ENCODE measurements at regions of chr11 and their contacts with region 1.

Region 1: DNA sequence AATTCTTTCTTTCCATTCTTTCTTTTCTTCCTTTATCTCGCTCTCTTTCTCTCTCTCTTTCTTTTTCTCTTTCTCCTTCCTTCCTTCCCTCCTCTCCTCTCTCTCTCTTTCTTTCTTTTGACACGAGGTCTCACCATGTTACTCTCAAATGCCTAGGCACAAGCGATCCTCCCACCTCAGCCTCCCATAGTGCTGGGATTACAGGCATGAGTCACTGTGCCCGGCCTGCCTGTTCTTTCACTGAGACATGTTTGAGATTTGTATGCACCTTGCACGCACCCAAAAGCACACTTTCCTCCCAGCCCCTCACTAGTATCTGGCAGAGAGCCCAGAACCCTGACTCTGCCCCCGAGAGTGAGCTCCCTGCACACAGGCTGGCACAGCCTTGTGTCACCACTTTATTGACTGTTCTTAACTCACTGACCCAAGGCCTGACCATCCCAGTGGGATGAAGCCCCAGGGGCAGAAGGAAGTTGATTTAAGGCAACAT is 56.8 kb downstream of the CD6 start:
- DNase-seq: peak in 3 of 9 donors; percentile 46 to 80 (median 60)
- ATAC-seq: peak; percentile 6
- H3K4me3 ChIP-seq: peak overlapping the region; percentile 30
- H3K4me3 Mint-ChIP-seq: peak overlapping the region; percentile 78 to 91 (median 86)
- H3K27ac ChIP-seq: peak overlapping the region; percentile 76
- H3K27ac Mint-ChIP-seq: peak overlapping the region; percentile 91 to 99 (median 97)
- H3K4me1 ChIP-seq: peaks cover 43 to 56% of the 10 kb centered on the region in 2 donors
- H3K4me1 Mint-ChIP-seq: peaks cover 62 to 97% (median 90%) of the 10 kb centered on the region in 7 donors
- H3K27me3 ChIP-seq: no peaks in the 10 kb centered on the region
- H3K27me3 Mint-ChIP-seq: no peaks in the 10 kb centered on the region

Region 2: GRCh38 chr11:60913793-60914632 is 114.3 kb before region 1 on chr11 and contains the start of gene TMEM109:
- CTCF ChIA-PET with region 1: no interaction called
- POLR2A ChIA-PET with region 1: interaction called, 3 read pairs
- intact Hi-C with region 1: loop called in 1 of 2 experiments (anchors 5 kb)
- DNase-seq: peak; percentile 77 to 93 (median 91)
- ATAC-seq: peak; percentile 76
- H3K4me3 ChIP-seq: peak within 1 kb of the TSS; percentile 94
- H3K4me3 Mint-ChIP-seq: peak within 1 kb of the TSS; percentile 91 to 99 (median 98)
- H3K27ac ChIP-seq: peak within 1 kb of the TSS; percentile 94
- H3K27ac Mint-ChIP-seq: peak within 1 kb of the TSS; percentile 91 to 99 (median 97)
- H3K4me1 ChIP-seq: peaks cover 43 to 45% of the 10 kb centered on the region in 2 donors
- H3K4me1 Mint-ChIP-seq: peaks cover 39 to 77% (median 60%) of the 10 kb centered on the region in 7 donors
- H3K27me3 ChIP-seq: no peaks in the 10 kb centered on the region
- H3K27me3 Mint-ChIP-seq: peaks cover 0 to 11% (median 0%) of the 10 kb centered on the region in 5 donors
- total RNA-seq, gene TMEM109: 49.8 to 99.8 (median 56.9) TPM

Region 3: DNA sequence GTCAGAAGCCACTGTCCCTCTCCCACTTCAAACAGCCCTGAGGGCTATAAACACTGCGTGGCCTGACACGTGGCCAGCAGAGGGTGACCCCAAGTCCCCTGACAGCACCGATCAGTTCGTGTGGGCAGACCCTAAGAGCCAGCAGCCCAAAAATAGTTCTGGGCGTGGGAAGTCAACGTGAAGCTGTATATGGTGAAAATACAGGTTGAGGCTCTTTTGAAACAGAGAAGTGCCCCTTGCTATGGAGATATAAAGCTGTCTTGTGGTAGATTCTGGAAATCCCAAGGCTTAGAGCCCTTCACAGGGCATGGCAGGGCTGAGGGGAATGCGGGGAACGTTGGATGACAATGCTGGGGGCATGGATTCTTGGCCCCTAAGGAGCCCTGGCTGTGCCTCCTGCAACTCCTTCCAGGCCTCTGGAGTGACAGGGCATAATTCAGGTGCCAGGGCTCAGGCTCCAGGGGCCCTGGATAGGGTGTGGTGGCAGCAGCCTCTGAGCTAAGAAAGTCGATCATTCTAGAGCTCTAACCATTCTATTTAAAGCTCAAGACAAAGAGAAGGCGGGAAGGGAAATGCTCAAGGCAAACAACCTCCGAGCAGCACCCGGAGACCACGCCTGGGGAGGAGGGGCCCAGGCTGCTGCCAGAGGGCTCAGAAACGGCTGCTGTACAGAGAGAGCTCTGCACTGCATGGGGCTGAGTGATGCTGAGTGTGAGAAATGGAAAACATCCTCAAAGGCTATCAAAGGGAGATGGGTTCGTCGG is 13.6 kb after region 1 on chr11:
- CTCF ChIA-PET with region 1: interaction called, 20 read pairs
- POLR2A ChIA-PET with region 1: interaction called, 210 read pairs
- intact Hi-C with region 1: loop called (anchors 1 kb)
- DNase-seq: peak; percentile 60 to 97 (median 96)
- ATAC-seq: peak; percentile 98
- H3K4me3 ChIP-seq: peak overlapping the region; percentile 20
- H3K4me3 Mint-ChIP-seq: peak overlapping the region; percentile 70 to 85 (median 76)
- H3K27ac ChIP-seq: peak overlapping the region; percentile 81
- H3K27ac Mint-ChIP-seq: peak overlapping the region; percentile 96 to 100 (median 98)
- H3K4me1 ChIP-seq: peaks cover 22 to 49% of the 10 kb centered on the region in 2 donors
- H3K4me1 Mint-ChIP-seq: peaks cover 40 to 70% (median 59%) of the 10 kb centered on the region in 7 donors
- H3K27me3 ChIP-seq: no peaks in the 10 kb centered on the region
- H3K27me3 Mint-ChIP-seq: no peaks in the 10 kb centered on the region

Region 4: GRCh38 chr11:61061081-61061826 is 32.9 kb after region 1 on chr11:
- CTCF ChIA-PET with region 1: interaction called, 7 read pairs
- POLR2A ChIA-PET with region 1: interaction called, 7 read pairs
- intact Hi-C with region 1: loop called (anchors 1 kb)
- DNase-seq: peak in 7 of 9 donors; percentile 47 to 89 (median 56)
- ATAC-seq: peak; percentile 86
- H3K4me3 ChIP-seq: peak overlapping the region; percentile 34
- H3K4me3 Mint-ChIP-seq: peak overlapping the region; percentile 75 to 94 (median 83)
- H3K27ac ChIP-seq: peak overlapping the region; percentile 72
- H3K27ac Mint-ChIP-seq: peak overlapping the region; percentile 88 to 99 (median 96)
- H3K4me1 ChIP-seq: peaks cover 24 to 48% of the 10 kb centered on the region in 2 donors
- H3K4me1 Mint-ChIP-seq: peaks cover 47 to 83% (median 80%) of the 10 kb centered on the region in 7 donors
- H3K27me3 ChIP-seq: no peaks in the 10 kb centered on the region
- H3K27me3 Mint-ChIP-seq: no peaks in the 10 kb centered on the region

Region 5: DNA sequence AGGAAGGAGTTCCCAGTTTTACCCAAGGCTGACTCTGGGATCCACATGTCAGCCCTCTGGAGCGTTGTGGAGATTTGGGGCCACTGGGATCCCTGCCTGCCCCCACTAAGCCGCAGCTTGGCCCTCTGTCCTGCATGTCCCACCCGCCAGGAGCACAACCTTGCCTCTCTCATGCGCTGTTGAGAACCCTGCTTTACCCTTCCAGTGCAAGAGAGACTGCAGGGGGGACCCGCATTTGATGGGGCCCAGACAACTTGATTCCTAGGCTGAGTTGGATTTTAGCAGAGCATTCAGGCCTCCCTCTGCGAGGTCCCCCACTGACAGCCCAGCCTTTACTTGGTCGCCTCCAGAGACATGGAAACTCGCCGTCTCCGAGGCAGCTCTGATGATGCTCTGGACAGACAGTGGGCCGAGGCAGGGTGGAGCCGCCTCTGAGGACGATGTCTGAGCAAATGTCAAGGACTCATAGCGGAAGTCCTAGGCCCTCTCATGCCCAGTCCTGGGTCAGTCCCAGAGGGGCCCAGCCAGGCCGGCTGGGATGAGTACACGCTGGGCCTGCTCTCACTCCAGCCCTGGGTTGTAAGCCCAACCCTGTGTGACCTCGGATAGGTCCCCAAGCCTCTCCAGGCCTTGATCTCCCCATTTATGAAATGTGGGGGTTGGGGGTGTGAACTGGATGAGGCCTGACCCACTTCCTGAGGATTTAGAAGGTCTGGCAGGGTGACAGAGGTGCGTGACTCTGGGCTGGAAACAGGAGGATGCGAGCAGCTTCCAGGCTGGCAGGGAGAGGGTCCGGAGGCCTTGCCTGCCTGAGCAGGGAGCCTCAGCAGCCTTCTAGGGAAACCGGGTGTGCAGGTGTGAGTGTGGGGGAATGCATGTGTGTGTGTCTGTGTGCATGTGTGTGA is 74.6 kb after region 1 on chr11:
- CTCF ChIA-PET with region 1: no interaction called
- POLR2A ChIA-PET with region 1: interaction called, 10 read pairs
- intact Hi-C with region 1: loop called in 1 of 2 experiments (anchors 1 kb)
- DNase-seq: peak in 3 of 9 donors; percentile 39 to 47 (median 40)
- ATAC-seq: peak; percentile 28
- H3K4me3 ChIP-seq: peak overlapping the region; percentile 100
- H3K4me3 Mint-ChIP-seq: peak overlapping the region in 1 of 10 donors; percentile 97
- H3K27ac ChIP-seq: peak overlapping the region; percentile 98
- H3K27ac Mint-ChIP-seq: no peak overlapping the region
- H3K4me1 ChIP-seq: peaks cover 39 to 46% of the 10 kb centered on the region in 2 donors
- H3K4me1 Mint-ChIP-seq: peaks cover 17 to 48% (median 40%) of the 10 kb centered on the region in 7 donors
- H3K27me3 ChIP-seq: no peaks in the 10 kb centered on the region
- H3K27me3 Mint-ChIP-seq: no peaks in the 10 kb centered on the region

Region 6: GRCh38 chr11:61161190-61162091 is 133.1 kb after region 1 on chr11 and contains the start of gene VPS37C:
- CTCF ChIA-PET with region 1: no interaction called
- POLR2A ChIA-PET with region 1: no interaction called
- intact Hi-C with region 1: loop called in 1 of 2 experiments (anchors 1 kb)
- DNase-seq: peak; percentile 80 to 99 (median 87)
- ATAC-seq: peak; percentile 83
- H3K4me3 ChIP-seq: peak within 1 kb of the TSS; percentile 74
- H3K4me3 Mint-ChIP-seq: peak within 1 kb of the TSS; percentile 85 to 96 (median 90)
- H3K27ac ChIP-seq: peak within 1 kb of the TSS; percentile 78
- H3K27ac Mint-ChIP-seq: peak within 1 kb of the TSS; percentile 84 to 96 (median 94)
- H3K4me1 ChIP-seq: peaks cover 7 to 14% of the 10 kb centered on the region in 2 donors
- H3K4me1 Mint-ChIP-seq: peaks cover 31 to 62% (median 48%) of the 10 kb centered on the region in 7 donors
- H3K27me3 ChIP-seq: no peaks in the 10 kb centered on the region
- H3K27me3 Mint-ChIP-seq: no peaks in the 10 kb centered on the region
- total RNA-seq, gene VPS37C: 4.1 to 12.0 (median 7.9) TPM

Measured in naive thymus-derived CD4-positive, alpha-beta T cell (primary cell).